Activated CD8-positive, alpha-beta memory T cell treated with anti-CD3 and anti-CD28 coated beads, Interleukin-2, amount 10 ng/mL, durations not matched to agents 7 days and 5 days (primary cell): ENCODE measurements at regions of chr3 and their contacts with region 1.

Region 1: DNA sequence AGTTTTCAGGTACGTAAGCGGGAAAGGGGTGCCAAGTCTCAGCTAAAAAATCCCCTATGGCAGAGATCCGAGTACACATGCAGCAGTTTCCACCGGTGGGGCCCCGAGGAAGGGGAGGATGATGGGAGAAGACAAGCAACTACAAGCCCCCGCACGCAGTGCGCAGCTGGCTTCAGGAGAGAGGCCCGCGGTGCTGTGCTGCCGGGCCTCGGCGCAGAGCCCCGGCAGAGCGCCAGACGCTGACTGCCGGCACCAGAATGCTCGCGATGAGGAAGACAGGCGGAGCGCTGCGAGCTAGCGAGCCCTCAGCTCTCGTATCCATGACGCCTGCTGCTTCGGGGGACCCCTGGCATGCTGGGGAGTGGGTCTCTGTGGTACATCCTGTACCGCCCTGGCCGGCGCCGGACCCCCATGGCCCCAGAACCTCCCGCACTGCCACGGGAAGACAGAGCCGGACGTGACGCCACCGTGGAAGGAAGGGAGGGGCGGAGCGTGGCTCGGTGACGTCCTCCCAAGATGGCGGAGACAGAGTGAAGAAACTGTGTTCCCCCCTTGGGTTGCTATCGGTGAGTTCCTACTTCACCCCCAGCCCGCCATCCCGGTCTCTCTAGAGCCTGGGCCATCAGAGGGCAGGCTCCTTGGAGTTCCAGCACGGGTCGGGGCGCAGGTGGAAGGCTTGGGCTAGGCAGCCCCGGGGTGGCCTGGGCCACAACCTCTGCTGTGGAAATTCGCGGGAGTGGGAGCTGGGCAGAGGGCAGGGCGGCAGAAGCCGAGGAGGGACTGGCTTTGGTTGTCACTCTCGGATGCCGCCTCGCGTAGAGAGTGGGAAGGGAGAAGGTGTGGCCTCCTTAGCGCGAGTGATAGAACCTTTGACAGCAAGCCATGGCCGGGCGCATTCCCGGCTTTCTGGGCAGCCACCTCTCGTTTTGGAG is at the start of gene MYNN:
- DNase-seq: peak; percentile 96
- ATAC-seq: peak; percentile 82
- H3K4me3 Mint-ChIP-seq: peak within 1 kb of the TSS; percentile 96
- H3K27ac Mint-ChIP-seq: peak within 1 kb of the TSS; percentile 99
- H3K4me1 Mint-ChIP-seq: peaks cover 40% of the 10 kb centered on the region
- H3K27me3 Mint-ChIP-seq: no peaks in the 10 kb centered on the region
- total RNA-seq, gene MYNN: 15.3 to 16.9 TPM

Region 2: GRCh38 chr3:169624533-169624972 is 148.6 kb before region 1 on chr3:
- CTCF ChIA-PET with region 1: no interaction called
- DNase-seq: no peak
- ATAC-seq: no peak
- H3K4me3 Mint-ChIP-seq: no peak overlapping the region
- H3K27ac Mint-ChIP-seq: no peak overlapping the region
- H3K4me1 Mint-ChIP-seq: no peaks in the 10 kb centered on the region
- H3K27me3 Mint-ChIP-seq: peaks cover 25% of the 10 kb centered on the region

Region 3: GRCh38 chr3:169811631-169812331 is 38.6 kb after region 1 on chr3:
- CTCF ChIA-PET with region 1: interaction called, 10 read pairs
- DNase-seq: peak; percentile 58
- ATAC-seq: peak; percentile 34
- H3K4me3 Mint-ChIP-seq: peak overlapping the region; percentile 75
- H3K27ac Mint-ChIP-seq: peak overlapping the region; percentile 90
- H3K4me1 Mint-ChIP-seq: peaks cover 49% of the 10 kb centered on the region
- H3K27me3 Mint-ChIP-seq: peaks cover 5% of the 10 kb centered on the region